Posterior cingulate gyrus (tissue), 11 donors: ENCODE measurements at regions of chr5 and their contacts with region 1.

Region 1: GRCh38 chr5:132963175-132964104 is at the start of gene AFF4:
- DNase-seq: peak; percentile 94 to 99 (median 96)

Region 2: DNA sequence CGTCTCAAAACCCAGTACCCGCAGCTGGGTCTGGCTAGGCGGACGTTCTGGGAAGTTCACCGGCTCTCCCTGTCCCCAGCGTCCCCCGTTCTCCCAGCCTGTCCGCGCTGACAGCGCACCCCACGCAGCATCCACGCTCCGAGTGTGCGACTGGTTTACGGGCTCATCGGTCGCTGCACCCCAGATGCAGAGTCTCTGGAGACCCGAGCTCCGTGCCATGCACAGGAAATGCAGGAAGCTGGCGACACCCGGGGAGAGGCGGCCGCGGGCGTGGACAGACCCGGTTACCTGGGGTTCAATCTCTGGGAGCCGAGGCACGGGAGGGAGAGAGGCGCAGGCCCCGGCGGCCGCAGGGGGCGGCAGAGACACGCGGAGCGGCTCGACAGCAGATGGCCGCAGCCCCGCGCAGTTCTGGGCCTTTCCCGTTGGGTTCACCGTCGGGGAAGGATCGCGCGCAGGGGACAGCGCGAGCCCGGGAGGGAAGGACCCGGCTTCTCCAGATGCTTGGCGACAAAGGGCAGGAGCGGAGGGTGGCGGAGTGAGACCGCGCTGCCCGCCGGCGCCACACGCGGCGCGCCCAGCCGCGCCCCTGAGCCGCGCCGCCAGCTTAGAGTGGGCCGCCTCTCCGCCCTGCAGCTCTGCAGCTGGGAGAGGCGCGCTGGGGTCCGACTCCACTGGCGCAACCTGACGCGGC is 133.6 kb before region 1 on chr5:
- intact Hi-C with region 1: loop called (anchors 10 kb)
- DNase-seq: peak; percentile 62 to 97 (median 72)

Region 3: DNA sequence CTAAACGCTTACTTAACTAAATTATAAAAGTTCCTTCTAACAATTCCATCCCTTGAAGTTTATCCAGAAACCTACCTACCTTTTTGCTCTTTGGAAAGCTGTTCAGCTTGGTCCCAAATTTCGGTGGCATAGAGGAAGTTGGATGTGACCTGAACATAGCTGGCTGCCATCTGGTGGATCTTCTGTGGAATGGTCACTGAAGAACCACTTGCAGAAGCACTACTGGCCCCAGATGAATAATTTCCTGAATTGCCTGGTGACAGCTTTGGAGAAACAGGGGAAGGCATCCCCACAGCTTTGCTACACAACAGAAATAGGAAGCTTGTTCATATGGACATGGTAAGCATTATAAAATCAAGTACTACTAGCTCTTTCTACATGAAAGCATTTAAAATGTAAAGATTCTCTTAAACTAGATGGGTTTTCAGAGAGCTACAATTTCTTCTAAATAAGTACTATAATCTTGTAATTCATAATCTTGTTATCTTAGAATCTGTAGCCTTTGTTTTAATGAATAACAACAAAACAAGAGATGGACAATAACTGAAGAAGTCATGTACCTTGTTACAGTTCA is 80.1 kb before region 1 on chr5:
- intact Hi-C with region 1: loop called (anchors 10 kb)
- DNase-seq: peak in 8 of 10 donors; percentile 18 to 91 (median 59)

Region 4: DNA sequence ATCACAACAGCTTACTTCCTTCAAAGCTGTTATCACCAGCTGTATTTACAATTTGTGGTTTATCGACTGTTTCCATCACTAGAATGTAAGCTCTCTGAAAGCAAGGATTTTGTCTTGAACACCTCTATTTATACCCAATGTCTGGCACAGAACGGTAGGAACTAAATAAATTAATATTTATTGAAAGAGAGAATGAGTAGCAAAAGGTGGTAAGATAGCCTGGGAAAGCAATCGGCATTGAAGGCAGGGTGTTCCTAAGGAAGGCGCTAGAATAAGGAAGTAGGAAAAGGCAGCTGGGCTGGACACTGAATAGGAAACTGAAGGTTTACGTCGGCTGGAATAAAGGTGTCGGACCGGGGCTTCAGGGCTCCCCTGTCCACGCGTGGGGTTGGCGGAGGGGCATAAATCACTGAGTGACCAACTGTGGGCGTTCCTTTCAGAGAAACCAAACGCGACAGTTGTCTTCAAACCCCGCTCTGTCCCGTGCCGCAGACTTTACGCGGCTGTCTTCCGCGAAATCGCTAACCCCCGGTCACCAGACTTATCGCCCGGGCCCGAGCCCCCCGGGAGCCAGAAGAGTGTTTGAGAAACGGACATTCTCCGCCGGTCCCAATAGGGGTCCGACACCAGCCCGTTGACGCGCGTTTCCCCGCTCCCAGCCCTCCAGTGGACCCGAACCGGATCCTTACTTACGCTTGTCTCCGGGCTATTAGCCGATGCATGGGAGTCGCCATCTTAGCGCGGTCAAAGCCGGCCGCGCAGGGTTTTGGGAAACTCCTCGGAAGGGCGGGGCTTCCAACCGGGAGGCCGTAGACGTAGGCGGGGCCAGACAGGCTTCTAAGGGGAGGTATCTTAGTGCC is 62.6 kb after region 1 on chr5 and contains the start of gene ZCCHC10:
- intact Hi-C with region 1: loop called (anchors 5 kb)
- DNase-seq: peak; percentile 87 to 99 (median 92)

Region 5: DNA sequence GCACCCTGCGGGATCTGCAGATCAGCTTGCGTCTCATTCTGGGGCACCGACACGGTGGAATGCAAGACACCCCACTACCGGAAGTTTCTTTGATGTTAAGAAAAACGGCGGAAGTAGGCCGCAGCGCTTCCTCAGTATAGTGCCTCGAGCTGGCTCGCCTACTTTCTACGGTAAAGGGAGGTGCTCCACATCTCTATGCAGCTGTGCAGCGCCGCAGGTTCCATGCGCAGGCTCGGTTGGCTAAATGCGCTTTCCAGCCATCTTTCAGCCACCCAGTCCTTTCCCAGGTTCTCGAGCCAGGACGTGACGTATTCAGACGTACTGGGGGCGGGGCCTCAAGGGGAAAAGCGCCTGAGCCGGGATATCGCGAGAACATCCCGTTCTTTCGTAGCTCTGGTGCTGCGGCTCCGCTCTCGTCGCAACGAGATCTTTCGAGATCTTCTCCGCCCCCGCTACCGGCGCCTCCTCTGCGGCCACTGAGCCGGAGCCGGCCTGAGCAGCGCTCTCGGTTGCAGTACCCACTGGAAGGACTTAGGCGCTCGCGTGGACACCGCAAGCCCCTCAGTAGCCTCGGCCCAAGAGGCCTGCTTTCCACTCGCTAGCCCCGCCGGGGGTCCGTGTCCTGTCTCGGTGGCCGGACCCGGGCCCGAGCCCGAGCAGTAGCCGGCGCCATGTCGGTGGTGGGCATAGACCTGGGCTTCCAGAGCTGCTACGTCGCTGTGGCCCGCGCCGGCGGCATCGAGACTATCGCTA is 88.3 kb after region 1 on chr5 and contains the start of gene HSPA4:
- intact Hi-C with region 1: loop called (anchors 2 kb)
- DNase-seq: peak; percentile 97 to 100 (median 99)